ENCODE measurements at regions of chr9 and their contacts with region 1.

Region 1: DNA sequence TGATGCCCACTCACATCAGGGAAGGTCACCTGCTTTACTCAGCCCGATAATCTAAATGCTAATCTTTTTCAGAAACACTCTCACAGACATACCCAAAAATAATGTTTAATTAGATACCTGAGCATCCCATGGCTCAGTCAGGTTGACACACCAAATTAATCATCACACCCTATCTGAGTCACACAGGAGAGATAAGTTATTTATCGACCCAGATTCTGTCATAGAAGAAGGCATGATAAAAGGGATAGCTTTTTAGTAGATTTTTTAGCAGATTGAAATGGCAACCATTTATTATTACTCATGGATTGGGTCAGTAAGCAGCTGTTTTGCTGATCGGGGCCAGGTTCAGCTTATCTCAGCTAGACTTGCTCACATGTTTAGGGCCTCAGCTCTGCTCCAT is 97.8 kb upstream of the TYRP1 start:
- DNase-seq: no peak
- H3K4me3 ChIP-seq: no peak overlapping the region
- H3K27ac ChIP-seq: no peak overlapping the region
- H3K4me1 ChIP-seq: no peaks in the 10 kb centered on the region
- H3K27me3 ChIP-seq: no peaks in the 10 kb centered on the region
- CTCF ChIP-seq: no peak
- EP300 ChIP-seq: no peak
- POLR2A ChIP-seq: no peak

Region 2: GRCh38 chr9:12276505-12276904 is 318.9 kb before region 1 on chr9:
- in situ Hi-C with region 1: no loop called
- intact Hi-C with region 1: loop called (anchors 5 kb)
- DNase-seq: no peak
- H3K4me3 ChIP-seq: no peak overlapping the region
- H3K27ac ChIP-seq: no peak overlapping the region
- H3K4me1 ChIP-seq: peaks cover 0 to 5% (median 2%) of the 10 kb centered on the region in 4 donors
- H3K27me3 ChIP-seq: no peaks in the 10 kb centered on the region
- CTCF ChIP-seq: no peak
- EP300 ChIP-seq: no peak
- POLR2A ChIP-seq: no peak

Region 3: GRCh38 chr9:12702160-12702758 is 106.9 kb after region 1 on chr9:
- in situ Hi-C with region 1: no loop called
- intact Hi-C with region 1: no loop called
- DNase-seq: peak; percentile 16
- H3K4me3 ChIP-seq: no peak overlapping the region
- H3K27ac ChIP-seq: no peak overlapping the region
- H3K4me1 ChIP-seq: peaks cover 0 to 16% (median 0%) of the 10 kb centered on the region in 4 donors
- H3K27me3 ChIP-seq: no peaks in the 10 kb centered on the region
- CTCF ChIP-seq: peak; percentile 29 to 58 (median 54)
- EP300 ChIP-seq: no peak
- POLR2A ChIP-seq: no peak